CD4-positive, alpha-beta T cell (primary cell): ENCODE measurements at regions of chr19 and their contacts with region 1.

Region 1: DNA sequence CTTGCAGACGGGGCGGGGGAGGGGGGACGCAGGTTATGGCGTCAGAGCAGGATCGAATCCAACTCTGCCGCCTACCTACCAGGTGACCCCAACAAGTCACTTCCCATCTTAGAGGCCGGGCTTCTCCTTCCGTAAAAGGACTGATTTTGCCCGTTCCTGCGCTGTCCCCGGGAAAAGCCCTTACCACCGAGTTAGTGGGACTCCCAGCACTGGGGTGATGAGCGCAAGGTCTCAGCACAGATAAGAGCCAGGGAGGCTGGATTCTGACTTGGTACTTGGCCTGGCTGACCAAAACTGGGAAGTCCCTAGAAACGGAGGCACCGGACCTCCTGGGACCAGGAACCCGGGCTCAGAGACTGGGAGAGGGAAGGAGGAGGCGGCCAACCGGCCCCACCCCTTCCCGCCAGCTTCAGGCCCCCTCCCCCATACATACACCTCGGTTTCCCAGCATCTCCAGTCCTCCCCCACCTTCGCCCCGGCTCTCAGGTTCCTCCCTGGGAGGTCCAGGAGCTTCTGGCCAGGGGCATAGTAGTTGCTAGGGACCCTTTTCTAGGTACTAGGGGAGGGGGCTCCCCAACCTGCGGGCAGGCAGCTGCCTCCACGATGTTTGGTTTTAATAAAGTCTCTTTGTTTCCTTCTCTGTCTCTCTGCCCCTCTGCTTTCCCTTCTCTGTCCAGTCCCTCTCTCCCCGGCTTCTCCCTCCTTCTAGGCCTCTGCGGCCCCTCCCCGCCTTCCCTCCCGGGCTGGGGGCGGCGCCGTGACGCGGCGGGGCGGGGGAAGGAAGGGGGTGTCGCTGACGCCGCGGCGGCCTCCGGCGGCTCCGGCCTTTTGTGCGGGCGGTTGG is at the start of gene GRAMD1A:
- DNase-seq: peak; percentile 50 to 85 (median 74)
- ATAC-seq: peak; percentile 28
- H3K4me3 ChIP-seq: peak within 1 kb of the TSS; percentile 59
- H3K4me3 Mint-ChIP-seq: peak within 1 kb of the TSS; percentile 99
- H3K27ac ChIP-seq: peak within 1 kb of the TSS; percentile 79 to 92
- H3K27ac Mint-ChIP-seq: peak within 1 kb of the TSS; percentile 98
- H3K4me1 ChIP-seq: peaks cover 89% of the 10 kb centered on the region
- H3K4me1 Mint-ChIP-seq: peaks cover 72% of the 10 kb centered on the region
- H3K27me3 ChIP-seq: no peaks in the 10 kb centered on the region
- H3K27me3 Mint-ChIP-seq: no peaks in the 10 kb centered on the region
- CTCF ChIP-seq: no peak
- total RNA-seq, gene GRAMD1A: 221 to 229 TPM

Region 2: DNA sequence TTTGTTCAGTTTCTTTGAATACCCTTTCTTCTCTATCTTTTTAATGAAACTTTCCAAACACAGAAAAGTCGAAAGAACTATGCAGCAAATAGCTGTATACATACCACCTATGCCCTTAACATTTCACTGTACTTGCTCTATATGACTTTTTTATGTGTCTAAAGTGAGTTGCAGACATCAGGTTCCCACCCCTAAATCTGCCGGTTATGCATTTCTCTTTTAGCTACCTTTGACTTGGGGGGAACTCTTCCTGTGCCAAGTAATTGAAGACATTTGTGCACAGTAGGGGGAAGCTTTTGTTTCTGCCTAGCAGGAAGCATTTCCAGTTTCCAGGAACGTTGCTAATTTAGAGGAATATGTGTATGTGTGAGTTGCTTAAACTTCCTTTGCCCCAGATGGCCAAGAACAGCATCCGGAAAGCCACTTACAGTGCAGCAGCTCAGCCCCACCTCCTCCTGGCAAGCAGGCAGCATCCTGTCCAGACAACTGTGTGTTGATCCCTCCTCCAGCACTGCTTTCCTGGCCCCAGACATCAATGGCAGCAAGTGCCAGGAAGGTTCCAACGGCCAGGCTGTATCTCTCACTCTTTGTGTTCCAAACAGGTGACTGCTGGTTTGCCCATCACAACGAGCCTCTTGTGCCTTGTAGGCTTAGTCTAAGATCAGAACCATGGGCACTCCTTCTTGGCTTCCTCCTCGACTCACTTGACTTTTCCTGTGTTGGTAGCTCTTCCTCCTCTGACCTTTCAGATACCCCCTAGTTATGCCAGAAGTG is 14.3 kb before region 1 on chr19:
- CTCF ChIA-PET with region 1: interaction called, 4 read pairs
- POLR2A ChIA-PET with region 1: interaction called, 15 read pairs
- intact Hi-C with region 1: no loop called
- DNase-seq: peak in 6 of 14 experiments; percentile 29 to 56 (median 42)
- ATAC-seq: peak; percentile 77
- H3K4me3 ChIP-seq: no peak overlapping the region
- H3K4me3 Mint-ChIP-seq: peak overlapping the region; percentile 43
- H3K27ac ChIP-seq: peak overlapping the region in 1 of 2 donors; percentile 8
- H3K27ac Mint-ChIP-seq: peak overlapping the region; percentile 50
- H3K4me1 ChIP-seq: peaks cover 13% of the 10 kb centered on the region
- H3K4me1 Mint-ChIP-seq: peaks cover 22% of the 10 kb centered on the region
- H3K27me3 ChIP-seq: no peaks in the 10 kb centered on the region
- H3K27me3 Mint-ChIP-seq: no peaks in the 10 kb centered on the region
- CTCF ChIP-seq: no peak